ENCODE measurements at regions of chr17 and their contacts with region 1.

Region 1: DNA sequence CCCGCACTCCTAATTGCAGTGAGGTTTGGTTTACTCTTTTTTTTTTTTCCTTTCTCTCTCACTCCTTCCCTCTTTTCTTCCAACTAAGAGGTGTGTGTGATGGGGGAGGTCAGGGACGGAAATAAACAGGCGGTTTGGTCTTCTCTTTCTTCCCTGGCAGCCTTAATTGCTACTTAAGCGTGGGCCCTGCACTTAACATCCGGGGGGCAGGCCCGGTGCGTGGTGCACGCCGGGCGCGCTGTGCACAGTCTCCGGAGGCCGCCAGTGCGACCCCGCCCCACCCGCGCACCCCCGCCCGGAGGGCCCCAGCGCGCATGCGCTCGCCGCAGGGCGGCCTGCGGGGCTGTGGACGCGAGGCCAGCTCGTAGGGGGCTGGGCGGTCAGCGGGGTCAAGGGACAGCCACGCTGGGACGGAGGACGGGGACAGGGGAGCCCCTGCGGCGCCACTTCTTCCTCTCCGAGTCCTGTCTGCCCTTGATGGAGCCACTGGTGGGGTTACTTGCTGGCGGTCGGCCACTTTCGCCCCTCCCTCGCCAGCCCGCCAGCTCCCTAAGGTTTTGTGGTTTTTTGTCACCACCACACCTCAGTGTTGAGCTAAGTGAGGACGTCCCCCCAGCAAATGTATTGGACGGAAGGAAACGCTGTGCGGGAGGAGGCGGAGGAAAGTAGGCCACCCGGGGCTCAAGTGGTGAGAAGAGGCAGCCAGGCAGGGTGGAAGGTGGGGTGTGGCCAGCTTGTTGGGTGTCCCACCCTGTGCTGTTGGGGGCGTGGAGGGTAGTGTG is 120.9 kb downstream of the MRM1 start:
- H3K4me3 ChIP-seq: peak overlapping the region; percentile 45
- H3K27ac ChIP-seq: peak overlapping the region; percentile 59
- H3K4me1 ChIP-seq: peaks cover 6% of the 10 kb centered on the region; the same call in 1 of the 2 replicates
- CTCF ChIP-seq: no peak

Region 2: DNA sequence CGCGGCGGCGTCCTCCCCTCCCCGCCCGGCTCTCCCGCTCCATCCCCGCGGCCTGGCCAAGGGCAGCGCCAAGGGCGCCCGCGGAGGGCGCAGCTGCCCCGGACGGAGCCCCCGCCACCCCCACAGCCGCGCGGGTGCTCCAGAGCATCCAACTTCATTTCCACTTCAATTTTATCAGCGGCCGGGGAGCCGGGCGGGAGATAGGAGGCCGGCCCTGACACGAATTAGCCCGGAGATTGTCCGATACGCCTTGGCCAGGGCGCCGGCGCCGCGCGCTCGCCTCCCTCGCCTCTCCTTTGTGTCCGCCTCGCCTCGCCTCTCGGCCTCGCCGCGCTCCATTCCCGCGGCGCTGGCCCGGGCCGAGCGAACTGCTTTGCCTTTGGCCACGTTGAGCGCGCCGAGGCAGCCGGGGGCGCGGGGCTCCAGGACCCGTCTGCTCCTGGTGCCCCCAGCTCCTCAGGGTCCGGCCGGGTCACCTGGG is 85.9 kb after region 1 on chr17:
- CTCF ChIA-PET with region 1: interaction called, 3 read pairs
- POLR2A ChIA-PET with region 1: interaction called, 13 read pairs
- H3K4me3 ChIP-seq: peak overlapping the region; percentile 16; the same call in 1 of the 2 replicates
- H3K27ac ChIP-seq: no peak overlapping the region
- H3K4me1 ChIP-seq: 0 out of 2 replicates have a peak, but pooled peaks cover 3% of the 10 kb centered on the region
- CTCF ChIP-seq: no peak